Esophagus muscularis mucosa (tissue), 4 donors: ENCODE measurements at regions of chr9 and their contacts with region 1.

Region 1: GRCh38 chr9:104808035-104808614 is 44.2 kb downstream of the NIPSNAP3B start:
- DNase-seq: no peak
- H3K4me3 ChIP-seq: no peak overlapping the region
- H3K27ac ChIP-seq: no peak overlapping the region
- H3K4me1 ChIP-seq: peaks cover 6 to 15% (median 14%) of the 10 kb centered on the region in 4 donors
- H3K27me3 ChIP-seq: no peaks in the 10 kb centered on the region
- CTCF ChIP-seq: peak in 2 of 3 experiments; percentile 6 to 12
- EP300 ChIP-seq: no peak
- POLR2A ChIP-seq: no peak

Region 2: GRCh38 chr9:104826907-104827306 is 18.8 kb after region 1 on chr9:
- intact Hi-C with region 1: loop called (anchors 1 kb)
- DNase-seq: no peak
- H3K4me3 ChIP-seq: no peak overlapping the region
- H3K27ac ChIP-seq: no peak overlapping the region
- H3K4me1 ChIP-seq: no peaks in the 10 kb centered on the region
- H3K27me3 ChIP-seq: no peaks in the 10 kb centered on the region
- CTCF ChIP-seq: no peak
- EP300 ChIP-seq: no peak
- POLR2A ChIP-seq: no peak